Dorsolateral prefrontal cortex (tissue), 120 donors: ENCODE measurements at regions of chr15 and their contacts with region 1.

Region 1: DNA sequence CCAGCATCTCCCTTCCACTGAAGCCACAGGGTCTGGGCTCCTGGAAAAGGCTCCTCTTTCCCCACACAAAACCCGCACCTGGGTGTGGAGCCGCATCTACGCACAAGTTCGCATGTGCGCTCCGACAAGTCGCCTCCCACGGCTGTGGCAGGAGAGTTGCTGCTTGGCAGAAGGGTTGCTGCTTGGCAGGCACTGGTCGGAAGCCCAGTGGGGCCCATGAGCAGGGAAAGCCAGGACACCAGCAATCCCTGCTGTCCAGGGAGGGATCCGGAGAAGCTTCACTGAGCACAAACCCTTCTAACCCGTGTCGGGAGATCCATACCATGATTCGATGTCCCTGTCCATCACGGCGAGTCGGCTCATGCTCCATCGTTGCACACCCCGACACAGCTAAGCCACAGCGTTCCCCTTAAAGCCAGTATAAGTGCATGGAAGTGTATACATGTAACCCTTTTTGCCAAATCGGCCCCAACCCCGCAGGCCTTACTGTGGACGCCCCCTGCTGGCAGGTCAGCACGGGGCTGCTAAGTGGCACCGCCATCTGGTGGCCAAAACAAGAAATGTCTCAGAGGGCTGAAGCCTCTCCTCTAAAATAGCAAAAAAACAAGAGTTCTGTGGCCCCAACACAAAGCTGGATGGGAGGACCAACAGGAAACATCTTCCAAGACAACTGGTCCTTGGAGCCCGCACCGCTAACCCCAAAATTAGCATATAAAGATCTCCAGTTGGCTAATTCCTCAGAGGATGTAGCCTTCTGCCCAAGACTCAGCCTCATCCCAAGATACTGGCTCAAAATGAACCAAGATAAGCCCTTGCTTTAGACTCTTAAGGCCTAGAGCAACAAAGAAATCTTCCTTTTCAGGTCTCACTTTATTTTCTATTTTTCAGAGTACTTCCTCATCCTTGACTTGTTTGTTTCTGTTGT is 8.3 kb downstream of the ANKRD63 start:
- DNase-seq: peak in 9 of 10 donors; percentile 63 to 83 (median 73)
- H3K4me3 ChIP-seq: no peak overlapping the region
- H3K27ac ChIP-seq: peak overlapping the region in 9 of 59 donors; percentile 6 to 60 (median 28)
- H3K27me3 ChIP-seq: peaks cover 0 to 11% (median under 1%) of the 10 kb centered on the region in 45 donors
- CTCF ChIP-seq: peak in 55 of 56 donors; percentile 94 to 100 (median 100)

Region 2: GRCh38 chr15:39782441-39783138 is 492.0 kb before region 1 on chr15 and contains the start of gene FSIP1:
- intact Hi-C with region 1: loop called in 1 of 2 experiments (anchors 10 kb)
- DNase-seq: peak; percentile 92 to 97 (median 94)
- H3K4me3 ChIP-seq: peak within 1 kb of the TSS; percentile 59 to 95 (median 81)
- H3K27ac ChIP-seq: peak within 1 kb of the TSS; percentile 3 to 94 (median 85)
- H3K27me3 ChIP-seq: no peaks in the 10 kb centered on the region
- CTCF ChIP-seq: peak in 23 of 56 donors; percentile 1 to 50 (median 16)
- total RNA-seq, gene FSIP1: 3.4 to 15.4 (median 8.8) TPM

Region 3: GRCh38 chr15:40108855-40109735 is 165.5 kb before region 1 on chr15 and contains the start of gene BMF:
- intact Hi-C with region 1: loop called in 1 of 2 experiments (anchors 5 kb)
- DNase-seq: peak; percentile 96 to 99 (median 98)
- H3K4me3 ChIP-seq: peak within 1 kb of the TSS; percentile 35 to 91 (median 71)
- H3K27ac ChIP-seq: peak within 1 kb of the TSS in 36 of 59 donors; percentile 10 to 79 (median 56)
- H3K27me3 ChIP-seq: no peaks in the 10 kb centered on the region
- CTCF ChIP-seq: peak in 49 of 56 donors; percentile 14 to 64 (median 44)
- total RNA-seq, gene BMF: 0.89 to 7.2 (median 2.6) TPM

Region 4: DNA sequence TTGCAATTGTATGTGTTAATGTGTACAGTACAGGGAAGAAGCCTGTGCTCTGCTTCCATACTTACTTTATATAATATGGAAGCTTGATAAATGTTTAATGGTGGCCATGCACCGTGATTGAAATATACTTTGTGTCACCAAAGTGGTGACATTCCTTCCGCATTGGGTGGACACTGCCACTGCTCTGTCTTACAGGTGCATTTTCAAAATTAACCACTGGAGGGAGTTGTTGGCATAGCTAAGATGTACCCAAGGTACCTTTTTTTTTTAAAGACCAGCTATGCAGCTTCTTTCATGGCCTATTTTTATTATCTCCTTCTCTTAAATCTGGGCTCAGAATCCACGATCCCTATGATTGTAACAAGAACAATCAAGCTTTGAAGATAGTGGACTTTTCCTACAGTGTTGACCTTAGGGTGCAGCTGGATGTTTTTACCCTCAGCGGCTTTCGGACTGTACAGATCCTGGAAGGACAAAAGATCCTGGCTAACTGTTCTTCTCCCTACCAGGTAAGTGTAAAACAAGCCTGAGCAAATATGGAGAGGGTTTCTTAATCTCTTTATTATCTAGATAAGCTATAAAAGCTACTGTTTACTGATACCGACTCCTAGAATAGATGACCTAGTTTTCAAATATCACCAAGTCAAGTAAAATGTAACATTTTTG is 57.3 kb before region 1 on chr15:
- intact Hi-C with region 1: loop called (anchors 5 kb)
- DNase-seq: peak in 3 of 10 donors; percentile 19 to 57 (median 34)
- H3K4me3 ChIP-seq: peak overlapping the region in 27 of 59 donors; percentile 2 to 40 (median 18)
- H3K27ac ChIP-seq: peak overlapping the region in 16 of 59 donors; percentile 4 to 68 (median 44)
- H3K27me3 ChIP-seq: peaks cover 0 to 5% (median 0%) of the 10 kb centered on the region in 45 donors
- CTCF ChIP-seq: peak; percentile 80 to 98 (median 88)

Region 5: GRCh38 chr15:40307421-40308211 is 33.0 kb after region 1 on chr15 and contains the start of gene PLCB2:
- intact Hi-C with region 1: loop called in 1 of 2 experiments (anchors 5 kb)
- DNase-seq: peak in 1 of 10 donors; percentile 27
- H3K4me3 ChIP-seq: peak within 1 kb of the TSS in 46 of 59 donors; percentile 0 to 54 (median 36)
- H3K27ac ChIP-seq: peak within 1 kb of the TSS in 24 of 59 donors; percentile 5 to 66 (median 38)
- H3K27me3 ChIP-seq: no peaks in the 10 kb centered on the region
- CTCF ChIP-seq: no peak
- total RNA-seq, gene PLCB2: 10.2 to 52.4 (median 21.2) TPM

Region 6: DNA sequence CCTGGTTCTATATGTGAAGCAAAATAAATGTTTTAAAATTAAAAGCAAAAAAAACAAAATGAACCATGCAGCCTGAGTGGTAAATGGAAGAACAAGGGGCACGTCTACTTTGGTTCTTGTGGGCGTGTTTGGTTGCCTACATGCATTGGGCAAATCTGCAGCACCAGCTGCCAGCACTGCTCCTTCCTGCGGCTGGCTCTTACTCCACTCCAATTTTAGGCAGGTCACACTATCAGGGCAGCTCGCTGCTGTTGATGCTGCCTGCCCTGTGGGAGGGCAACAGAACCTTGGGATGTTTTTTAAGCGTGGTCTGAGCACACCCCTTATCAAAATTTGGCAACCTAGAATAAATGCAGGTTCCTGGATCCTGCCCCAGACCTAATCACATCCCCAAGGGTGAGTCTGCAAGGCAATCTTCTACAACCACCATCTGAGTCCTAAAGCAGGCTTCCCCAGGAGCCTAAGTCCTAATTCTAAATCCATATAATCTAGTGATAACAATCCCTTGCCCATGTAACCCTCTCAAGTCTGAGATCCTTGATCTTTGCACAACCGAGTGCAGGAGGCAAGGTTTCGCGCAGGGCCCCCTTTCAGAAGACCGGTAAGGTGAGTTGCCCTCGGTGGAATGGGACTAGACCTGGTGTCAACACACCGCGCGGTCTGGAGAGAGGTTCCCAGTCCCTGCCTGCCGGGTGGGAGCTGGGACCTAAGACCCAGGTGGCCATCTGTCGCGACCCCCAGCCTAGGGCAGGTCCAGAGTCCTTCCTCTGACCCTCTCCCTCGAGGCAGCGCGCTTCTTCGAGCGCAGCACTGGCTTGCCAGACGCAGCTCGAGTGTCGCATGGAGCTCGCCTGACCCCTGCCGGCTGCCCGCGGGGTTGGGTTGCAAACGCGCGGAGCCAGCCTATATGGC is 146.9 kb after region 1 on chr15:
- intact Hi-C with region 1: loop called in 1 of 2 experiments (anchors 5 kb)
- DNase-seq: peak; percentile 67 to 89 (median 80)
- H3K4me3 ChIP-seq: peak overlapping the region in 21 of 59 donors; percentile 9 to 33 (median 20)
- H3K27ac ChIP-seq: peak overlapping the region in 25 of 59 donors; percentile 0 to 66 (median 33)
- H3K27me3 ChIP-seq: no peaks in the 10 kb centered on the region
- CTCF ChIP-seq: peak; percentile 56 to 99 (median 92)